ENCODE measurements at regions of chr2 and their contacts with region 1.

Region 1: GRCh38 chr2:207473049-207473930 is 56.5 kb upstream of the CREB1 start:
- DNase-seq: peak in 1 of 3 donors; percentile 25
- ATAC-seq: peak; percentile 83 to 93 (median 89)
- H3K4me3 ChIP-seq: peak overlapping the region in 1 of 3 donors; percentile 12
- H3K27ac ChIP-seq: peak overlapping the region in 1 of 3 donors; percentile 13
- H3K4me1 ChIP-seq: peaks cover 0 to 4% (median 0%) of the 10 kb centered on the region in 4 donors
- H3K27me3 ChIP-seq: no peaks in the 10 kb centered on the region
- CTCF ChIP-seq: peak; percentile 57 to 69 (median 62)
- POLR2A ChIP-seq: no peak

Region 2: GRCh38 chr2:206800506-206801417 is 672.5 kb before region 1 on chr2:
- intact Hi-C with region 1: loop called (anchors 10 kb)
- DNase-seq: peak in 2 of 3 donors; percentile 26 to 60
- ATAC-seq: peak; percentile 84 to 89 (median 86)
- H3K4me3 ChIP-seq: no peak overlapping the region
- H3K27ac ChIP-seq: no peak overlapping the region
- H3K4me1 ChIP-seq: no peaks in the 10 kb centered on the region
- H3K27me3 ChIP-seq: no peaks in the 10 kb centered on the region
- CTCF ChIP-seq: peak; percentile 67 to 72 (median 70)
- POLR2A ChIP-seq: no peak